Posterior vena cava (tissue), 2 donors: ENCODE measurements at regions of chr5 and their contacts with region 1.

Region 1: GRCh38 chr5:134131578-134132350 is 17.3 kb downstream of the TCF7 start:
- DNase-seq: peak; percentile 35

Region 2: DNA sequence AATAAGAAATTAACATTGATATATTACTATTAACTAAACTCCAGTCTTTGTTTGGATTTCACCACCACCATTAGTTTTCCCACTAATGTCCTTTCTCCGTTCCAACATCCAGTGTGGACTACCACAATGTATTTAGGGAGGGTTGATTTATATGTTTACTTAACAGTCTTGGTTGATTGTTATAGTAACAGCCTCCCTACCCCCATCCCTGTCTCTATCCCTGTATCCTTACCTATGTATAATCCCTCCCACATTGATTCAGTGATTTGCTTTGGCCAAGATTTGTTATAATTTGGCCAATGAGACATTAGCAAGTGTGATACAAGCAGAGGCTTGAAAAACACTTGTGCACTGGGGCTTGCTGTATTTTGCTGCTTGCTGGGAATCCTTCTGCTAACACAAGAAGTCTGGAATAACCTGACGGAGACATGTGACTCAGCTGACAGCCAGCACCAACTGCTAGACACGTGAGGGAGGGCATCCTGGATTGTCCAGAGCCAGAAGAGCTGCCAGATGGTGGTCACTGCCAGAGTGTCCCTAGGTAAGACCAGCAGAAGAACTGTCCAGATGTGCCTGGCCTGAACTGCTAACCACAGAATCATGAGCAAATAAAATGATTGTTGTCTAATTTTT is 68.5 kb before region 1 on chr5:
- intact Hi-C with region 1: loop called in 1 of 2 experiments (anchors 2 kb)
- DNase-seq: no peak